ENCODE measurements at regions of chr12 and their contacts with region 1.

Region 1: DNA sequence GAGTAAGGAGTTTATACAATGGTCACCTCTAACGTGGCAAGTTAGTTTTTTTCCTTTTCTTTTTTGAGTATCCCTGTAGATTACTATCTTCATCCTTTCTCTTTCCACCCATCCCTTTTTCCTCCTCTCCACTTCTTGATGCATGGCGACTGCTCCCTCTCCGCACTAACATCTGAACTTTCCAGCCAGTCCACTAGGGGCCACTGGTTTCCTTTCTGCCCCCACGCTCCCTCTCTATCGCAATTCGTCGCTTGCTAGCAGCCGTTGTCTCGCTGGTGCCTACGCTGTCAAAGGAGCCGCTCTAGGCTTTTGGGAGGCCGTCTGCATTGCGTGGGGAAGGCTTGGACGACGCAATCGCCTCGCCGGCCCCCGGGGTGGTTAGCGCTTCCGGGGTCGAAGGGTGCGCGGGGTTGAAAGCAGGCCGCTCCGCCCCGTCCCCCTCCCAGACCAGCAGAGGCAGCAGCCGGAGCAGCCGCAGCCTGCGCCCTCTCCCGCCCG is at the start of gene PCBP2:
- DNase-seq: peak; percentile 88 to 98 (median 97)
- ATAC-seq: peak; percentile 94
- H3K4me3 ChIP-seq: peak within 1 kb of the TSS; percentile 69
- H3K4me3 Mint-ChIP-seq: peak within 1 kb of the TSS; percentile 51 to 99 (median 98)
- H3K27ac ChIP-seq: peak within 1 kb of the TSS; percentile 96
- H3K27ac Mint-ChIP-seq: peak within 1 kb of the TSS; percentile 85 to 100 (median 99)
- H3K4me1 ChIP-seq: peaks cover 20 to 26% of the 10 kb centered on the region in 2 donors
- H3K4me1 Mint-ChIP-seq: peaks cover 23 to 42% (median 37%) of the 10 kb centered on the region in 7 donors
- H3K27me3 ChIP-seq: no peaks in the 10 kb centered on the region
- H3K27me3 Mint-ChIP-seq: no peaks in the 10 kb centered on the region
- total RNA-seq, gene PCBP2: 737 to 1,110 (median 928) TPM

Region 2: DNA sequence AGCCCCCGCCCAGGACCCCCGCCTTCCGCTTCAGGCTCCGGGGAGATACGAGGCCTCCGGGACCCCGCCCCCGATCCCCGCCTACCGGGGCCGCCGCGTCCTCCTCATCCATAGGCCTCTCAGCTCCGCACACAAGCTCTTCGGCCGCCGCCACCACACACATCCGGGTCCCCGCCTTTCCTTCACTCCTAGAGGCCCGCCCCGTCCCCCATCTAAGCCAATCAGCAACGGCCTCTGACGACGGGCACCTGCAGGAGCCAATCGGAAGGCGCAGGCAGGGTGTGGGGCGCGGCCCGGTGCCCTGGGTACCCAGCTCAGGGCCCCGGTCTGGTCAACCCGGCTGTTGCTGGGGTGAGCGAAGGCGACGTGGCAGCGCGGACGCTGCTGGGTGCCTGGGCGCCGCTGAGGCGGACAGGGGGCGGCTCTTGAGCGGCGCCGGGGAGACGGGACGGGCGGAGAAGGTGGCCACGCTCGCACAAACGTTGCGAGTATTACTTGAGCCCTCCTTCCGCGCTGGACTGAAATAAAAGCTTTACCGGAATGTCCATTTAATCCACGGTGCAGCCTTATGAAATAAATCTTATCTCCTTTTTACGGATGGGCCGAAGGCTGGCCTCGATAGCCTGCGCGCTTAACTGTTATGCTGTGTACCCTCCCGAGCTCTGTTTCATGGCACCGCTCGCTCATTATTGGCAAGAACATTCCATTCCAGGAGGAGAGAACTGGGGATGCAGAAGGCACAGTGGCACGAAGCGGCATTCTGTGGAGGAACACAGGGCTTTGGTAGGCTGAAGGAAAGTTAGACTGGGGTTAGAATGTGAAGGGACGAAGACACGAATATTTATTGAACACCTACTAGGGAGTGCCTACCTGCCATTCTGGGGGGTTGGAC is 372.2 kb before region 1 on chr12 and contains the start of gene SPRYD3:
- CTCF ChIA-PET with region 1: no interaction called
- POLR2A ChIA-PET with region 1: no interaction called
- intact Hi-C with region 1: loop called in 1 of 2 experiments (anchors 1 kb)
- DNase-seq: peak; percentile 96 to 99 (median 97)
- ATAC-seq: peak; percentile 99
- H3K4me3 ChIP-seq: peak within 1 kb of the TSS; percentile 95
- H3K4me3 Mint-ChIP-seq: peak within 1 kb of the TSS; percentile 90 to 98 (median 92)
- H3K27ac ChIP-seq: peak within 1 kb of the TSS; percentile 93
- H3K27ac Mint-ChIP-seq: peak within 1 kb of the TSS; percentile 95 to 98 (median 96)
- H3K4me1 ChIP-seq: peaks cover 10 to 14% of the 10 kb centered on the region in 2 donors
- H3K4me1 Mint-ChIP-seq: peaks cover 26 to 53% (median 40%) of the 10 kb centered on the region in 7 donors
- H3K27me3 ChIP-seq: no peaks in the 10 kb centered on the region
- H3K27me3 Mint-ChIP-seq: peaks cover 0 to 3% (median 0%) of the 10 kb centered on the region in 5 donors
- total RNA-seq, gene SPRYD3: 33.0 to 48.0 (median 36.4) TPM

Region 3: GRCh38 chr12:53205747-53206419 is 245.8 kb before region 1 on chr12:
- CTCF ChIA-PET with region 1: no interaction called
- POLR2A ChIA-PET with region 1: no interaction called
- intact Hi-C with region 1: loop called in 1 of 2 experiments (anchors 5 kb)
- DNase-seq: peak in 1 of 9 donors; percentile 75
- ATAC-seq: peak; percentile 68
- H3K4me3 ChIP-seq: peak overlapping the region; percentile 84
- H3K4me3 Mint-ChIP-seq: peak overlapping the region; percentile 83 to 92 (median 86)
- H3K27ac ChIP-seq: peak overlapping the region; percentile 85
- H3K27ac Mint-ChIP-seq: peak overlapping the region; percentile 61 to 90 (median 87)
- H3K4me1 ChIP-seq: peaks cover 63 to 73% of the 10 kb centered on the region in 2 donors
- H3K4me1 Mint-ChIP-seq: peaks cover 53 to 84% (median 71%) of the 10 kb centered on the region in 7 donors
- H3K27me3 ChIP-seq: no peaks in the 10 kb centered on the region
- H3K27me3 Mint-ChIP-seq: no peaks in the 10 kb centered on the region

Region 4: GRCh38 chr12:53441040-53441833 is 10.5 kb before region 1 on chr12 and contains the start of gene PRR13:
- CTCF ChIA-PET with region 1: interaction called, 4 read pairs
- POLR2A ChIA-PET with region 1: interaction called, 15 read pairs
- intact Hi-C with region 1: loop called (anchors 1 kb)
- DNase-seq: peak; percentile 90 to 99 (median 96)
- ATAC-seq: peak; percentile 99
- H3K4me3 ChIP-seq: peak within 1 kb of the TSS; percentile 93
- H3K4me3 Mint-ChIP-seq: peak within 1 kb of the TSS; percentile 89 to 99 (median 96)
- H3K27ac ChIP-seq: peak within 1 kb of the TSS; percentile 92
- H3K27ac Mint-ChIP-seq: peak within 1 kb of the TSS; percentile 91 to 97 (median 97)
- H3K4me1 ChIP-seq: peaks cover 18 to 24% of the 10 kb centered on the region in 2 donors
- H3K4me1 Mint-ChIP-seq: peaks cover 30 to 52% (median 43%) of the 10 kb centered on the region in 7 donors
- H3K27me3 ChIP-seq: no peaks in the 10 kb centered on the region
- H3K27me3 Mint-ChIP-seq: no peaks in the 10 kb centered on the region
- total RNA-seq, gene PRR13: 147 to 215 (median 201) TPM

Region 5: DNA sequence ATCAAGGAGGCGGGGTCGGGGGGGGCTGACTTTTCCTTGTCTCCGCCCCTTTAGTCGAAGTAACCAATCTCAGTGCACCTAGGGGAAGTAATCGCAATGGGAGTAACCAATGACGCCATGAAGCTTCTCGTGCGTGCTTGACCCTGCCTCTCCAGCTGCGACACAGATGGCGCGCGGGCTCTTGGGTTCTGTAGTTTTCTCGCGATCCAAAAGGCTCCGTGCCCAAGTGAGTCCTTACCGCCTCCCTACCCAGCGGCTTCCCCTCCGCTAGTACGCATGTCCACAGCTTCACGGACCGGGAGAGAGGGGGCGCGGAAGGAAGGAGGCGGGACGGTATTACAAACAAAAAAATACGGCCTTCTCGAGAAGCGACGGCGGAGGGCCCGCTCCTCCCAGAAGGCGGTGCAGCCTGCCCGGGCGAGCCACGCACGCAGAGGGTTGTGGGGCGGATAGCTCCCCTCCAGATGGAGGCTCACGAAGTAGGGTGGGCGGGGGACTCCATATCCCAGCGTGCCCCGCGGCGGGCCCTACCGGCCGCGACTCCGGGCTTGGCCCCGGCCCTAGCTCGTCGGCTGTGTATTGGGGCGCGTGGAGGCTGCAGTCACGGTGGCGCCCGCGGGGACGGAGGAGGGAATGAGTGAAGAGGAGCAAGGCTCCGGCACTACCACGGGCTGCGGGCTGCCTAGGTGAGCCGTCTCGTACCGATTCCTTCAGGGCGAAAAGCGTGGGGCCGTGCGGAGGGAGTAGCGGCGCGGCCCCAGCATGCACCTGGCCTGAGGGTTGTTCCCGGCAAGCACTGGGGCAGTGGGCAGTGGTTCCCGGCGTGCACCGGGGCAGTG is 49.3 kb after region 1 on chr12 and contains the start of gene TARBP2:
- CTCF ChIA-PET with region 1: interaction called, 5 read pairs
- POLR2A ChIA-PET with region 1: interaction called, 9 read pairs
- intact Hi-C with region 1: loop called (anchors 1 kb)
- DNase-seq: peak; percentile 87 to 99 (median 98)
- ATAC-seq: peak; percentile 87
- H3K4me3 ChIP-seq: peak within 1 kb of the TSS; percentile 84
- H3K4me3 Mint-ChIP-seq: peak within 1 kb of the TSS; percentile 86 to 96 (median 92)
- H3K27ac ChIP-seq: peak within 1 kb of the TSS; percentile 98
- H3K27ac Mint-ChIP-seq: peak within 1 kb of the TSS; percentile 87 to 100 (median 97)
- H3K4me1 ChIP-seq: peaks cover 24 to 27% of the 10 kb centered on the region in 2 donors
- H3K4me1 Mint-ChIP-seq: peaks cover 15 to 56% (median 43%) of the 10 kb centered on the region in 7 donors
- H3K27me3 ChIP-seq: no peaks in the 10 kb centered on the region
- H3K27me3 Mint-ChIP-seq: no peaks in the 10 kb centered on the region
- total RNA-seq, gene TARBP2: 25.1 to 45.2 (median 40.7) TPM

Region 6: GRCh38 chr12:53625946-53626701 is 174.4 kb after region 1 on chr12 and contains the start of gene ATF7:
- CTCF ChIA-PET with region 1: interaction called, 3 read pairs
- POLR2A ChIA-PET with region 1: no interaction called
- intact Hi-C with region 1: loop called (anchors 1 kb)
- DNase-seq: peak; percentile 95 to 100 (median 99)
- ATAC-seq: peak; percentile 97
- H3K4me3 ChIP-seq: peak within 1 kb of the TSS; percentile 92
- H3K4me3 Mint-ChIP-seq: peak within 1 kb of the TSS; percentile 97 to 100 (median 98)
- H3K27ac ChIP-seq: peak within 1 kb of the TSS; percentile 83
- H3K27ac Mint-ChIP-seq: peak within 1 kb of the TSS; percentile 95 to 99 (median 97)
- H3K4me1 ChIP-seq: peaks cover 20 to 32% of the 10 kb centered on the region in 2 donors
- H3K4me1 Mint-ChIP-seq: peaks cover 30 to 55% (median 49%) of the 10 kb centered on the region in 7 donors
- H3K27me3 ChIP-seq: no peaks in the 10 kb centered on the region
- H3K27me3 Mint-ChIP-seq: peaks cover 0 to 6% (median 0%) of the 10 kb centered on the region in 5 donors
- total RNA-seq, gene ATF7: 21.9 to 39.5 (median 30.9) TPM

Region 7: DNA sequence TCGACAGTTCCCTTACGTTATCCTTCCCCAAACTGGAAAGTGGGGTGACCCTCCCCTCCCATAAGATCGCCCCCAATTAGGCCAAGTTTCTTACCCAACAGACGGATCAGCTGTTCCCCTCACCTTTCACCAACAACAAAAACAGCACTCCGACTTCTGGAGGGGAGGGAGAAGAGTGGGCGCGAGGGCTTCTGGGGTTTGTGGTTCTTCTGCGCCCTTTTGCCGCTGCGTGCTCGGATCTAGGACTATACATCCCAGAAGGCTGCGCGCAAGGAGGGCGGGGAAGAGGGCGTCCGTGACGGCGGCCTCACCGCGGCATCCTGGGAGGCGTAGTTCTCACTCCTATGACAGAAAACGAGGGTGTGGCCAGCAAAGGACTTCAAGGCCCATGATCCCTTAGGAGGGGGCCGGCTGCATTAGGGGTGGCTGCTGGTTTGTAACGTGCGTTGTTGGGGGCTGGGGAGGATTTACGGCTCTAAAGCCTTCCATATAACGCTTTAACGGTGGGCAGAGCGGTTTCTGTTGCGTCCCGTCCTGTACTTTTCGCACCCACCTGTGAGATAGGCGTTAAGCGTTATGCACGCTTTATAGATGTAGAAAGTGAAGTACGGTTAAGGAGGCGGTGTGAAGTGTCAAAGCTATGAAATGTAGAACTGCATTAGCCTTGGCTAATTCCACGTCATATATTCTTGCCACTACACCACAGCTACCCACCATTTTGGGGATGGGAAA is 275.8 kb after region 1 on chr12 and contains the start of gene CALCOCO1:
- CTCF ChIA-PET with region 1: no interaction called
- POLR2A ChIA-PET with region 1: no interaction called
- intact Hi-C with region 1: loop called (anchors 1 to 5 kb)
- DNase-seq: peak; percentile 84 to 98 (median 95)
- ATAC-seq: peak; percentile 98
- H3K4me3 ChIP-seq: peak within 1 kb of the TSS; percentile 94
- H3K4me3 Mint-ChIP-seq: peak within 1 kb of the TSS; percentile 91 to 100 (median 94)
- H3K27ac ChIP-seq: peak within 1 kb of the TSS; percentile 73
- H3K27ac Mint-ChIP-seq: peak within 1 kb of the TSS; percentile 69 to 98 (median 91)
- H3K4me1 ChIP-seq: peaks cover 13 to 17% of the 10 kb centered on the region in 2 donors
- H3K4me1 Mint-ChIP-seq: peaks cover 10 to 41% (median 32%) of the 10 kb centered on the region in 7 donors
- H3K27me3 ChIP-seq: no peaks in the 10 kb centered on the region
- H3K27me3 Mint-ChIP-seq: peaks cover 0 to 13% (median 0%) of the 10 kb centered on the region in 5 donors
- total RNA-seq, gene CALCOCO1: 66.1 to 175 (median 137) TPM

Measured in naive thymus-derived CD4-positive, alpha-beta T cell (primary cell).